H1 (cell line): ENCODE measurements at regions of chr5 and their contacts with region 1.

Region 1: DNA sequence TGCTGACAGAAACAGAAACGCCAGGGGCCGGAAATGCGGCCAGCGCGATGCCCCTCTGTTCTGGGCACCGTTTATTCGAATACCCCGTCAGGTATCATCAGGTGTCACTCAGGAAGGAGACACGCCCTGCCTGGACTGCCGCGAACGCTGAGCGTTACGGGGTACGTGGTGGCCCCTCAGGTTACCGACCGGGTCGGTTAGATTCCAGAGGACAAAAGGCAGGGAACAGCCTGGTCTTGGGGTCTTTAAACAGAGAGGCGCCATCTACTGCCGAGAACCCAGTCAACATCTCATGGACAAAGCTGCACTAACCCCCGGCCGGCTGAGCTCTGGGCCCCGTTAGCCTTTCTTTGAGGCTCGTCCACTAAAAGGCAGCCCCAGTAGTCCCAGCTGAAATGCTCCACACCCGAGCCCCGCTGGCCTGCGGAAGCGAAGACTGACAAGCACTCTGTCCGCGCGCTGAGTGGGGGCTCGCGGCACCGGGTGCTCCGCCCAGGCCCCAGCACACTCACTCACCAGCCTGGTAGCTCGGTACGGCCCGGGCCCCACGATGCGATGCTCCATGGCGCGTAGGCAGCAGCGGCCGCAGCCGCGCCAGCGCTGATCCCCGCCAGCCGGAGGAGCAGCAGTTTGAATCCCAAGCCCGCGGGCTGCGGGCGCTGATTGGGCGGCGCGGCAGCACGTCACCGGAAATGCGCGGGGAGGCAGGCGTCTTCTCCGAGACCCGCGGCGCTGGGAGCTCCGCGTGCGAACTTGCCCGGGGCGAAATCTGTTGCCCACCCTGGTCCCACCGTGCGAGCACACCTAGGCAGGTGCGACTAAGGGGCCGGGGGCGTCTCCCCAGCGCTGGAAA is at the start of gene DEPDC1B:
- DNase-seq: peak; percentile 70 to 95
- H3K4me3 ChIP-seq: peak within 1 kb of the TSS; percentile 78 to 87 (median 86)
- H3K27ac ChIP-seq: peak within 1 kb of the TSS; percentile 97
- H3K4me1 ChIP-seq: peaks cover 0 to 12% (median 6%) of the 10 kb centered on the region in 4 experiments; a peak in 3 of 7 replicates
- H3K27me3 ChIP-seq: no peaks in the 10 kb centered on the region
- CTCF ChIP-seq: peak; percentile 4 to 47 (median 19); a peak in 3 of 4 replicates
- EP300 ChIP-seq: 0 out of 3 replicates have a peak, but pooled peaks of 1 of the 2 experiments have one; percentile 43
- POLR2A ChIP-seq: peak; percentile 94 to 98
- RAD21 ChIP-seq: peak in 1 of 2 experiments; percentile 0; a peak in 2 of 4 replicates
- total RNA-seq, gene DEPDC1B: 64.9 and 67.4 TPM in 2 replicates

Region 2: GRCh38 chr5:60633341-60633740 is 66.4 kb before region 1 on chr5:
- CTCF ChIA-PET with region 1: no interaction called
- POLR2A ChIA-PET with region 1: no interaction called
- DNase-seq: no peak
- H3K4me3 ChIP-seq: no peak overlapping the region
- H3K27ac ChIP-seq: no peak overlapping the region
- H3K4me1 ChIP-seq: no peaks in the 10 kb centered on the region
- H3K27me3 ChIP-seq: no peaks in the 10 kb centered on the region
- CTCF ChIP-seq: no peak
- EP300 ChIP-seq: no peak
- POLR2A ChIP-seq: no peak
- RAD21 ChIP-seq: no peak

Region 3: GRCh38 chr5:60687927-60688720 is 11.6 kb before region 1 on chr5:
- CTCF ChIA-PET with region 1: interaction called, 34 read pairs
- POLR2A ChIA-PET with region 1: interaction called, 27 read pairs
- DNase-seq: no peak
- H3K4me3 ChIP-seq: no peak overlapping the region
- H3K27ac ChIP-seq: no peak overlapping the region
- H3K4me1 ChIP-seq: peaks cover 0 to 2% (median 0%) of the 10 kb centered on the region in 4 experiments; a peak in 1 of 7 replicates
- H3K27me3 ChIP-seq: no peaks in the 10 kb centered on the region
- CTCF ChIP-seq: peak; percentile 1 to 58 (median 43)
- EP300 ChIP-seq: no peak
- POLR2A ChIP-seq: no peak
- RAD21 ChIP-seq: peak; percentile 11 to 42; a peak in 3 of 4 replicates

Region 4: GRCh38 chr5:60710373-60710772 is 10.6 kb after region 1 on chr5:
- CTCF ChIA-PET with region 1: interaction called, 10 read pairs
- POLR2A ChIA-PET with region 1: interaction called, 24 read pairs
- DNase-seq: no peak
- H3K4me3 ChIP-seq: no peak overlapping the region
- H3K27ac ChIP-seq: no peak overlapping the region
- H3K4me1 ChIP-seq: no peaks in the 10 kb centered on the region
- H3K27me3 ChIP-seq: no peaks in the 10 kb centered on the region
- CTCF ChIP-seq: no peak
- EP300 ChIP-seq: no peak
- POLR2A ChIP-seq: no peak
- RAD21 ChIP-seq: peak in 1 of 2 experiments; percentile 23; a peak in 1 of 4 replicates

Region 5: DNA sequence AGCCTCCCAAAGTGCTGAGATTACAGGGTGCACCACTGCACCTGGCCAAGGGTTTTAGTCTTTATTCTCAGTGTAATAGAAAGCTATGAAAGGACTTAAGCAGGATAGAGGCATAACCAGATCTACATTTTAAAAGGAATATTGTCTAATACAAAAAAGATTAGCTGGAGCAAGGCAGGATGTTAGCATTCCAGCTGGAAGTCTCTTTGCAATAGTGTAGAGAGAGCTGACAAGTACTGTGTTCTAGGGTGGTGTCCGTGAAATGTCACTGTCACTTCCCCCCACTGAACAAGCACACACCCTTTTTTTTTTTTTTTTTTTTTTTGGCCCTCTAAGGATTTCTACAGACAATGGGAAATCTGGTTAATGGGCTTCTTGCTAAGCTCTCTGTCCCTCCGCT is 24.4 kb after region 1 on chr5:
- CTCF ChIA-PET with region 1: interaction called, 4 read pairs
- POLR2A ChIA-PET with region 1: interaction called, 10 read pairs
- DNase-seq: no peak
- H3K4me3 ChIP-seq: no peak overlapping the region
- H3K27ac ChIP-seq: no peak overlapping the region
- H3K4me1 ChIP-seq: no peaks in the 10 kb centered on the region
- H3K27me3 ChIP-seq: no peaks in the 10 kb centered on the region
- CTCF ChIP-seq: no peak
- EP300 ChIP-seq: no peak
- POLR2A ChIP-seq: no peak
- RAD21 ChIP-seq: no peak

Region 6: GRCh38 chr5:60794691-60795090 is 94.9 kb after region 1 on chr5:
- CTCF ChIA-PET with region 1: interaction called, 5 read pairs
- POLR2A ChIA-PET with region 1: interaction called, 20 read pairs
- DNase-seq: no peak
- H3K4me3 ChIP-seq: no peak overlapping the region
- H3K27ac ChIP-seq: no peak overlapping the region
- H3K4me1 ChIP-seq: peaks cover 5 to 11% (median 8%) of the 10 kb centered on the region in 4 experiments
- H3K27me3 ChIP-seq: no peaks in the 10 kb centered on the region
- CTCF ChIP-seq: no peak
- EP300 ChIP-seq: no peak
- POLR2A ChIP-seq: no peak
- RAD21 ChIP-seq: no peak; a peak in 1 of 4 replicates

Region 7: DNA sequence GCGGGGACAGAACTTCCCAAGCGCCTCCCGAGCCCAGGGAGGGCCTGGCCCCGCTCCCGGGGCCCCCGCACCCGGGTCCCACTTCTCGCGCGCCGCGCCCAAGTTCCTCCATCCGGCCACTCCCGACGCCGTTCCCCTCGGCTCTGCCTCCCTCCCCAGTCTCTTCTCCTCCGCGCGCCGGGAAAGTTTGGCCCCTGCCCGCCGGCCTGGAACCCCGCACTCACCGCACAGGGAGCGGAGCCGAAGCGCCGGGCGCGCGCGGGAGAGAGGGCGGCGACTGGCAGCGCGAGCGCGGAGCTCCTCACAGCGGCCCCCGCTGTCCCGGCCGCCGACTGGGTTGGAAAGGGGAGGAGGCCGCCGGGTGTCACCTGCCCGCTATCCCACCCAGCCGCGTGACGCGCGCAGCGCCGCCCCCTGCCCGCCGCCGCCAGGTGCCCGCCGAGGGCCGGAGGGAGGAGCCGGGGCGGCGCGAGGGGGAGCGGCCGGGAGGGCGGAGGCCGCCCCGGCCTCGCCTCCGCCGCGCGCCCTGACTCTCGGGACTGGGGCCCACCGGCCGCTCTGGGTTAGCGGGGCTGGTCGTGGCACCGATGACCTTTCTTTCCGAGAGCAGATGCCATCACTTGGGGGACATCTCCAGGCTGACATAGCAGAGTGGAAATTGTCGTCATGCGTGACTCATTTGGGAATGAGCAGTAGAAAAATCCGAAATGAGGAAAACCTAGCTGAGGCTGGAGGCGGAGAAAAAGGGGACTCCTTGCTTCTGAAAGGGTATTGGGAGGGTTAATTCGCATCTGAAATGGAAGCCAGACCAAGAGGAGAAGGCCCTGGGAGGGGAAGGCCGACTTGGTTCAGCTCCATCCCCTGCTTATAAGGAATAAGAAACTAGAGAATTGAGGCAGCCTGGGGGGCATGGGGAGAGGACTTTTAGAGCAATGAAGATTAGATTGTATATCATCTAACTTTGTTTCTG is 144.5 kb after region 1 on chr5 and contains the start of gene ELOVL7:
- CTCF ChIA-PET with region 1: interaction called, 4 read pairs
- POLR2A ChIA-PET with region 1: interaction called, 26 read pairs
- DNase-seq: peak; percentile 70 to 92
- H3K4me3 ChIP-seq: peak within 1 kb of the TSS; percentile 64 to 85 (median 78)
- H3K27ac ChIP-seq: 0 out of 2 replicates have a peak within 1 kb of the TSS, but pooled peaks have one; percentile 14
- H3K4me1 ChIP-seq: peaks cover 0 to 7% (median 4%) of the 10 kb centered on the region in 4 experiments; a peak in 3 of 7 replicates
- H3K27me3 ChIP-seq: peaks cover 0 to 20% (median 15%) of the 10 kb centered on the region in 4 experiments; a peak in 6 of 7 replicates
- CTCF ChIP-seq: peak; percentile 6 to 44 (median 27)
- EP300 ChIP-seq: no peak; a peak in 1 of 3 replicates
- POLR2A ChIP-seq: peak in 1 of 2 experiments; percentile 76; a peak in 2 of 3 replicates
- RAD21 ChIP-seq: peak; percentile 30 to 46; a peak in 3 of 4 replicates
- total RNA-seq, gene ELOVL7: 5.1 and 6.5 TPM in 2 replicates